H1 (cell line): ENCODE measurements at regions of chr19 and their contacts with region 1.

Region 1: GRCh38 chr19:46373421-46374359 is 26.8 kb downstream of the PPP5C start:
- DNase-seq: peak; percentile 62 to 73
- H3K4me3 ChIP-seq: peak overlapping the region in 3 of 4 experiments; percentile 5 to 42 (median 19); a peak in 5 of 8 replicates
- H3K27ac ChIP-seq: peak overlapping the region; percentile 84
- H3K4me1 ChIP-seq: peaks cover 14 to 30% (median 21%) of the 10 kb centered on the region in 4 experiments
- H3K27me3 ChIP-seq: no peaks in the 10 kb centered on the region
- CTCF ChIP-seq: peak in 1 of 3 experiments; percentile 17; a peak in 1 of 4 replicates
- EP300 ChIP-seq: no peak
- POLR2A ChIP-seq: peak in 1 of 2 experiments; percentile 51; a peak in 1 of 3 replicates
- RAD21 ChIP-seq: no peak

Region 2: DNA sequence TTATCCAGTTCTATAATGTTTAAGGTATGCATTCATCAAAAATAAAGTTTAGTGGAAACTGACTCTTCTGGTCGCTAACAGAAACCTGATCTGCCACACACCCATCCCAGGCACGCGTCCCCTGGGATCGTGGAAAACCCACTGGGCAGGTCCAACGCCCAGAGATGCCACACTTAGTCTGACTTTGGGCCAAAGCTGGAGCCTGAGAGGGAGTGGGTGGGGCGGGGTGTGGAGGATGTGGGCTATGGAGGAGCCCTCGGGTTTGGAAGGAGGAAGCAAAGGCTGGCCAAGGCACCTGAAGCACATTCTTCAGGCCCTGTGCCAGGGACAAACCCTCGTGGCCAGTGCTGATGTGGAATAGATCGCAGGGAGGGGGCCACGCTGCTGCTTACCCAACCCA is 141.7 kb before region 1 on chr19:
- CTCF ChIA-PET with region 1: no interaction called
- POLR2A ChIA-PET with region 1: no interaction called
- DNase-seq: no peak
- H3K4me3 ChIP-seq: no peak overlapping the region
- H3K27ac ChIP-seq: no peak overlapping the region
- H3K4me1 ChIP-seq: no peaks in the 10 kb centered on the region
- H3K27me3 ChIP-seq: peaks cover 0 to 2% (median 0%) of the 10 kb centered on the region in 4 experiments; a peak in 1 of 7 replicates
- CTCF ChIP-seq: no peak
- EP300 ChIP-seq: no peak
- POLR2A ChIP-seq: no peak
- RAD21 ChIP-seq: no peak

Region 3: DNA sequence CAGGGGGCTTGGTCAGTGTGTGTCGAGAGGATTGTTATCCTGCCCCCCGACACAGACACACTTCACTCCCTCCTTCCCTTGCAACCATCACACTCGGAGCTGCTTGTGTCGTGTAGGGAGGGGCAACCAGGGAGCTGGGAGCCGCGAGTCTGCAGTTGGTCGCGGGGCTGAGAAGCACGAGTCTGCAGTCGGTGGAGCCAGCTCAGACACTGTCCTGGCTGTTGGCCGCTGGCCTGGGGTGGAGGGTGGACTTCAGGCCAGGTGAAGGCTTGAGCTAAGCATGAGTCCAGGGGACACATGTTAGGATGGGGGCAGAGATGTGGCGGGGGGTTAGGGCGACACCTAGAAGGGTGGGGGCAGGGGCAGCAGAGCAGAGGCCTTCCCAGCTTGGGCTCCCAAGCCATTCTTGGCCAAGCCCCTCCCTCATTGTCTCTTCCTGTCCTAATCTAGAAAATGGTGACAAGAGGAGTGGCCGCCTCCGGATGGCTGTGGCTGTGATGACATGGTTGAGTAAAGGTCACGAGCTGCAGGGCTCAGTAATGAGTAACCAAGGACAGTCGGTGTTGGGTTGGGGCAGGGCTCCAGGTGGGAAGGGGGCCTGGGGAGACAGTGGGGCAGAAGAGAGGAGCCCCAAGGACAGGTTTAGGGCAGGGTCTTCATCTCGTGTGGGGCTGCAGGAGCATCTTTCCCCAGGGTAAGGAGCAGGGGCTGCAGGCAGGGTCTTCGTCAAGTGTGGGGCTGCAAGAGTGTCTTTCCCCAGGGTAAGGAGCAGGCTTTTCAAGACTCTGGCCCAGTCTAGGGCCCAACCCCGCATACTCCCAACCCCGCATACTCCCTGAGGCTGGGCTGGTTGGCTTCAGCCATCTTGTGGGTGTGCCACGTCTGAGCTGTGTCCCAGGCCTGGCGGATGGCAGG is 18.2 kb before region 1 on chr19:
- CTCF ChIA-PET with region 1: interaction called, 13 read pairs
- POLR2A ChIA-PET with region 1: interaction called, 8 read pairs
- DNase-seq: no peak
- H3K4me3 ChIP-seq: no peak overlapping the region
- H3K27ac ChIP-seq: no peak overlapping the region
- H3K4me1 ChIP-seq: peaks cover 0 to 6% (median 2%) of the 10 kb centered on the region in 4 experiments; a peak in 4 of 7 replicates
- H3K27me3 ChIP-seq: no peaks in the 10 kb centered on the region
- CTCF ChIP-seq: no peak
- EP300 ChIP-seq: no peak
- POLR2A ChIP-seq: no peak
- RAD21 ChIP-seq: no peak

Region 4: GRCh38 chr19:46384396-46384795 is 10.7 kb after region 1 on chr19:
- CTCF ChIA-PET with region 1: interaction called, 20 read pairs
- POLR2A ChIA-PET with region 1: interaction called, 5 read pairs
- DNase-seq: no peak
- H3K4me3 ChIP-seq: no peak overlapping the region
- H3K27ac ChIP-seq: no peak overlapping the region
- H3K4me1 ChIP-seq: peaks cover 0 to 2% (median 0%) of the 10 kb centered on the region in 4 experiments; a peak in 2 of 7 replicates
- H3K27me3 ChIP-seq: no peaks in the 10 kb centered on the region
- CTCF ChIP-seq: no peak
- EP300 ChIP-seq: no peak
- POLR2A ChIP-seq: no peak
- RAD21 ChIP-seq: no peak

Region 5: GRCh38 chr19:46503848-46504453 is 130.3 kb after region 1 on chr19:
- CTCF ChIA-PET with region 1: no interaction called
- POLR2A ChIA-PET with region 1: no interaction called
- DNase-seq: no peak
- H3K4me3 ChIP-seq: no peak overlapping the region
- H3K27ac ChIP-seq: no peak overlapping the region
- H3K4me1 ChIP-seq: no peaks in the 10 kb centered on the region
- H3K27me3 ChIP-seq: no peaks in the 10 kb centered on the region
- CTCF ChIP-seq: no peak
- EP300 ChIP-seq: no peak
- POLR2A ChIP-seq: no peak
- RAD21 ChIP-seq: no peak